Activated CD8-positive, alpha-beta T cell treated with anti-CD3 and anti-CD28 coated beads, Interleukin-2, amount 10 ng/mL, durations not matched to agents 7 days and 5 days (primary cell): ENCODE measurements at regions of chr12 and their contacts with region 1.

Region 1: GRCh38 chr12:120580787-120581723 is at the start of gene POP5:
- DNase-seq: peak; percentile 97
- ATAC-seq: peak; percentile 97
- H3K4me3 Mint-ChIP-seq: peak within 1 kb of the TSS; percentile 99
- H3K27ac Mint-ChIP-seq: peak within 1 kb of the TSS; percentile 96
- H3K4me1 Mint-ChIP-seq: peaks cover 41% of the 10 kb centered on the region
- H3K27me3 Mint-ChIP-seq: peaks cover 15% of the 10 kb centered on the region
- total RNA-seq, gene POP5: 63.3 to 64.0 TPM

Region 2: DNA sequence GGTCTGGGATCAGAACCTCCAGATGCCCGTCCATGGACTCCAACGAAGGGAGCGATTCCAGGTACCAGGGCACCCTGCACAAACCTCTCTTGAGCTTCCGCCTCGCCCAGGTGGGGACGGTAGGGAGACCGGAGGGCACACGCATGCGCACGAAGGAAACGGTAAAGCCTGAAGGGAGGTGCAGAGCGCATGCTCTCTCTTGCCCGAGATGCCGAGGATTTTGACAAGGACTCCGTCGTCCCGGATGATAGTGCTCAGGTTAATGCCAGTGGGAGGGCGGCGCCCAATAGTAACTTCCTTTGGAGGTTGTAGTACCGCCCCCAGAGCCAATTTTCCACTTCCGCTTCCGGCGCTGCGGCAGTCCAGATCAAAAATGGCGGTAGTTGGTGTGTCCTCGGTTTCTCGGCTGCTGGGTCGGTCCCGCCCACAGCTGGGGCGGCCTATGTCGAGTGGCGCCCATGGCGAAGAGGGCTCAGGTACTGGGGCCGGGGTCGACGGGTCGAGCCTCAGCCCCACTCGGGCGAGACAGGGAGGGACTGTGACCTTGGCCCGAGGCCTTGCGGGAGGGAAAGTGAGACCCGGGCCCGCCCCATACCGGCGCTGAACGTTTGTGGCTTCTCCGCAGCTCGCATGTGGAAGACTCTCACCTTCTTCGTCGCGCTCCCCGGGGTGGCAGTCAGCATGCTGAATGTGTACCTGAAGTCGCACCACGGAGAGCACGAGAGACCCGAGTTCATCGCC is 143.1 kb before region 1 on chr12 and contains the start of gene COX6A1:
- CTCF ChIA-PET with region 1: interaction called, 10 read pairs
- POLR2A ChIA-PET with region 1: no interaction called
- DNase-seq: peak; percentile 99
- ATAC-seq: peak; percentile 98
- H3K4me3 Mint-ChIP-seq: peak within 1 kb of the TSS; percentile 83
- H3K27ac Mint-ChIP-seq: peak within 1 kb of the TSS; percentile 92
- H3K4me1 Mint-ChIP-seq: peaks cover 24% of the 10 kb centered on the region
- H3K27me3 Mint-ChIP-seq: no peaks in the 10 kb centered on the region
- total RNA-seq, gene COX6A1: 337 to 351 TPM

Region 3: GRCh38 chr12:120686690-120687577 is 105.9 kb after region 1 on chr12 and contains the start of gene MLEC:
- CTCF ChIA-PET with region 1: interaction called, 25 read pairs
- POLR2A ChIA-PET with region 1: no interaction called
- DNase-seq: peak; percentile 99
- ATAC-seq: peak; percentile 87
- H3K4me3 Mint-ChIP-seq: peak within 1 kb of the TSS; percentile 93
- H3K27ac Mint-ChIP-seq: peak within 1 kb of the TSS; percentile 81
- H3K4me1 Mint-ChIP-seq: peaks cover 54% of the 10 kb centered on the region
- H3K27me3 Mint-ChIP-seq: no peaks in the 10 kb centered on the region
- total RNA-seq, gene MLEC: 95.0 to 102 TPM

Region 4: DNA sequence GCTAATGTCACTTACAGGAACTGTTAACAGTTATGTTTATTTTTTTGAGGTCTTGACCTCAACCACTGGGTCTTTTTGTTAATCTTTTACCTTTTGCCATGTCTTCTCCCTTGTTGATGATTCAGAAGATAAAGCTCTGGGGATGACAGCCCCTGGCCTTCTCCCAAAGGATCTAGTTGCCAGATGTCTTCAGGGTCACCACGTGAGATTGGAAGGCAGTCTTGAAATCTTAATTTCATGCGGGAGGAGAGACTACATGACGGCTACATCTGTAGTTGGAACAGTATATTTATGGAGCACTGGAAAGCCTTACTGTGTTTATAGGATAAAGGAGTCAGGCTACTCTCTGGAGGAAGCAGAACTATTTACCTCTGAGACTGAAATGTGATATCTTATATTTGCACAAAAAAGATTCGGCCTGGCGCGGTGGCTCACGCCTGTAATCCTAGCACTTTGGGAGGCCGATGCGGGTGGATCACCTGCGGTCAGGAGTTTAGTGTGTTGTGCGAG is 111.5 kb after region 1 on chr12:
- CTCF ChIA-PET with region 1: interaction called, 25 read pairs
- POLR2A ChIA-PET with region 1: no interaction called
- DNase-seq: no peak
- ATAC-seq: no peak
- H3K4me3 Mint-ChIP-seq: no peak overlapping the region
- H3K27ac Mint-ChIP-seq: peak overlapping the region; percentile 58
- H3K4me1 Mint-ChIP-seq: peaks cover 53% of the 10 kb centered on the region
- H3K27me3 Mint-ChIP-seq: no peaks in the 10 kb centered on the region

Region 5: GRCh38 chr12:120710031-120710804 is 129.2 kb after region 1 on chr12 and contains the start of gene UNC119B:
- CTCF ChIA-PET with region 1: interaction called, 12 read pairs
- POLR2A ChIA-PET with region 1: no interaction called
- DNase-seq: peak; percentile 77
- ATAC-seq: peak; percentile 83
- H3K4me3 Mint-ChIP-seq: peak within 1 kb of the TSS; percentile 87
- H3K27ac Mint-ChIP-seq: peak within 1 kb of the TSS; percentile 81
- H3K4me1 Mint-ChIP-seq: peaks cover 37% of the 10 kb centered on the region
- H3K27me3 Mint-ChIP-seq: no peaks in the 10 kb centered on the region
- total RNA-seq, gene UNC119B: 18.5 to 18.9 TPM